Activated CD8-positive, alpha-beta T cell treated with anti-CD3 and anti-CD28 coated beads for 36 hours (primary cell): ENCODE measurements at regions of chr4 and their contacts with region 1.

Region 1: GRCh38 chr4:182925298-182925738 is 8.1 kb upstream of the DCTD start:
- DNase-seq: peak; percentile 76
- ATAC-seq: peak; percentile 99
- H3K4me3 Mint-ChIP-seq: no peak overlapping the region
- H3K27ac Mint-ChIP-seq: no peak overlapping the region
- H3K4me1 Mint-ChIP-seq: no peaks in the 10 kb centered on the region
- H3K27me3 Mint-ChIP-seq: peaks cover 2% of the 10 kb centered on the region
- CTCF ChIP-seq: peak; percentile 64

Region 2: GRCh38 chr4:181143250-181143854 is 1782.0 kb before region 1 on chr4:
- CTCF ChIA-PET with region 1: no interaction called
- POLR2A ChIA-PET with region 1: no interaction called
- intact Hi-C with region 1: loop called (anchors 10 kb)
- DNase-seq: peak; percentile 84
- ATAC-seq: peak; percentile 68
- H3K4me3 Mint-ChIP-seq: no peak overlapping the region
- H3K27ac Mint-ChIP-seq: no peak overlapping the region
- H3K4me1 Mint-ChIP-seq: no peaks in the 10 kb centered on the region
- H3K27me3 Mint-ChIP-seq: no peaks in the 10 kb centered on the region
- CTCF ChIP-seq: peak; percentile 89

Region 3: GRCh38 chr4:182483685-182484084 is 441.6 kb before region 1 on chr4:
- CTCF ChIA-PET with region 1: interaction called, 5 read pairs
- POLR2A ChIA-PET with region 1: no interaction called
- intact Hi-C with region 1: loop called (anchors 5 kb)
- DNase-seq: no peak
- ATAC-seq: no peak
- H3K4me3 Mint-ChIP-seq: no peak overlapping the region
- H3K27ac Mint-ChIP-seq: no peak overlapping the region
- H3K4me1 Mint-ChIP-seq: no peaks in the 10 kb centered on the region
- H3K27me3 Mint-ChIP-seq: peaks cover 4% of the 10 kb centered on the region
- CTCF ChIP-seq: no peak

Region 4: GRCh38 chr4:182680234-182680653 is 245.1 kb before region 1 on chr4:
- CTCF ChIA-PET with region 1: no interaction called
- POLR2A ChIA-PET with region 1: no interaction called
- intact Hi-C with region 1: no loop called
- DNase-seq: no peak
- ATAC-seq: no peak
- H3K4me3 Mint-ChIP-seq: no peak overlapping the region
- H3K27ac Mint-ChIP-seq: no peak overlapping the region
- H3K4me1 Mint-ChIP-seq: no peaks in the 10 kb centered on the region
- H3K27me3 Mint-ChIP-seq: peaks cover 9% of the 10 kb centered on the region
- CTCF ChIP-seq: no peak

Region 5: GRCh38 chr4:183407128-183407585 is 481.8 kb after region 1 on chr4:
- CTCF ChIA-PET with region 1: no interaction called
- POLR2A ChIA-PET with region 1: no interaction called
- intact Hi-C with region 1: no loop called
- DNase-seq: peak; percentile 93
- ATAC-seq: peak; percentile 96
- H3K4me3 Mint-ChIP-seq: peak overlapping the region; percentile 74
- H3K27ac Mint-ChIP-seq: peak overlapping the region; percentile 80
- H3K4me1 Mint-ChIP-seq: peaks cover 10% of the 10 kb centered on the region
- H3K27me3 Mint-ChIP-seq: no peaks in the 10 kb centered on the region
- CTCF ChIP-seq: peak; percentile 70